Vagina (tissue), 2 donors: ENCODE measurements at regions of chr10 and their contacts with region 1.

Region 1: DNA sequence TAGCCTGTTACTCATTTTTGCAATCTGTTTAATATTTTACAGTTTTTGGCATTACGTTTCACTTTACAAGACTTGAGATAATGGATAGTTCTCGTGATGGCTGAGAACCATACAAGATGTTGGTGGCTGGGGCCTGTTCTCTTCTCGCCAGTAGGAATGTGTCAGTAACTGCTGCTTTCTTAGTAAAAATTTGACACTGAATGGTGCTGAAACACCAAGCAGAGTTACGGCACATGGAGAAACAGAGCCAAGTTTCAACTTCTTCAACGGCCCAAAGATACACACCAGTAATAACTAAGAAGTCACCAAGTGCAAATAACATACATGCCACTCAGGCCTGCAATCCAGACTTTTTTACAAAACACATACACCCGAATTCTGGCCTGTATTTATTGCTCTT is 130.4 kb downstream of the NRP1 start:
- DNase-seq: no peak
- H3K4me3 ChIP-seq: no peak overlapping the region
- H3K27ac ChIP-seq: no peak overlapping the region
- H3K4me1 ChIP-seq: no peaks in the 10 kb centered on the region
- H3K27me3 ChIP-seq: no peaks in the 10 kb centered on the region
- CTCF ChIP-seq: no peak
- POLR2A ChIP-seq: no peak

Region 2: GRCh38 chr10:33109788-33110469 is 94.1 kb before region 1 on chr10:
- intact Hi-C with region 1: no loop called
- DNase-seq: no peak
- H3K4me3 ChIP-seq: no peak overlapping the region
- H3K27ac ChIP-seq: no peak overlapping the region
- H3K4me1 ChIP-seq: peaks cover 5% of the 10 kb centered on the region
- H3K27me3 ChIP-seq: no peaks in the 10 kb centered on the region
- CTCF ChIP-seq: no peak
- POLR2A ChIP-seq: no peak

Region 3: DNA sequence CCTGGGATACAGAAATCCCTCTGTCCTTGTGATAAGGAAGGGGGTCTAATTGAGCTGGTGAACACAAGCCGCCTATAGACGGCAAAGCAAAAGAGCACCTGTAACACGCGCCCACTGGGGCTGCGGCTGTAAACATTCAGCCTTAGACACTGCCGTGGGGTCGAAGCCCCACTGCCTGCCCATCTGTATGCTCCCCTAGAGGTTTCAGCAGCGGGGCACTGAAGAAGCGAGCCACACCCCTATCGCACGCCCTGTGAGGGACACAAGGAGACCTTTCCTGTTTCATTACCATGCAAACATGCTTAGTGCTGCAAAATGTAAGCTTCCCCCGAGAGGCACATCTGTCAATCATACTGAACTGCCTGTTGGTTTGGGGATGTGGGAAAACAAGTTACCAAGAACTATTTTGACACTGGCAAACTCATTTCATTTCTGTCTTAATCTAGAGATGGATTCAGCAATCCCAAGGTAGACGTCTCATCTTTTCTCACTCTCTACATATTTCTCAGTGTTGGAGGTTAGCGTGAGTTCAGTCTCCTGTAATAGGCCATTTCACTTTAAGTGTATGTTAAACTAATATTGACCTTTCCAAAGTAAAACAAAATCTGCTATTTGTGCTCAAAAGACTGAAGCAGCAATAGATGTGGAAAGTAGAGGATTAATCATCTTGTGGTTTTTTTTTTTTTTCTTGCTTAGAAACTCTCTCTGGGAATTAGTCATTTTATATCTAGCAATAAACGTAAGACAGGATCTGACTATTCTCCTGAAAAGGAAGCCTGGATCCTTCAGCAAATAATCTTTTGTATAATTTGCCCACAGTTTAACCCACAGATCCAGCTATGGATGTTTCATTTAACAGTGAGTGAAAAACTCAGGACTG is 48.5 kb after region 1 on chr10:
- intact Hi-C with region 1: loop called (anchors 10 kb)
- DNase-seq: no peak
- H3K4me3 ChIP-seq: no peak overlapping the region
- H3K27ac ChIP-seq: no peak overlapping the region
- H3K4me1 ChIP-seq: no peaks in the 10 kb centered on the region
- H3K27me3 ChIP-seq: no peaks in the 10 kb centered on the region
- CTCF ChIP-seq: no peak
- POLR2A ChIP-seq: no peak

Region 4: DNA sequence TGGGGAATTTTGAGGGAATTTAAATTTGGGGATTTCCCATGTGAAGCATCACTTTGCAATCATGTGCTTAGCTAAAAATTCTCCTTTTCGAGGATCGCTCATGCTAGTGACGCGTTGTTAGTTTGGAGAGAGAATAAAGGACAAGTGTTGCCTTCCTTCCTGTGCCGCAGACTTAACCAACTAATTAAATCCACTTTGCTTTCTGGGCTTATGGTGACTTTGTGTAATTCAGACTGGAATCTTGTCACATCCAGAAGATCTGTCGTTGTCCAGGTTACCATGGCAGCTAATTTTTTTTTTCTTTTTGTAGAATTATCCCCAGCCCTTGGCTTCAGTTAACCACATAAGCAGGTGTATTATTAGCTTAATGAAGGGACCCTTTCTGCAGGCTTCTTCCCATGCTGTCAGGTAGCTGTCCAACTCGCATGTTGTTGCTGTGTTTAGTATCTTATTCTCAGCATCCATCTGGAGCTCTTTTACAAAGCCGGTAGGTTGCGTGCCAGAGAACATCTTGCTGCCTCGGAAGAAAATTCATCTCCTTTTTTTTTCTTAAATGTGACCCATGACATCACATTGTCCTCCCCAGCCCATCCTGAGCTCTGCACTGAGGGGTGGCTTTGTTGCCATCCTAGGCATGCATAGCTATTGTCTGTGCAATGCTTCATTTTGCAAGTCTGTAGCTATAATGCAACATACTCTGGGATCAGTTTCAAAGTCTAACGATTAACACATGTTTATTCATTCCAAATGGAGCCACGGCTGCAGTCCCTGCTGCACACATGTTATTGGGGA is 177.6 kb after region 1 on chr10:
- intact Hi-C with region 1: no loop called
- DNase-seq: no peak
- H3K4me3 ChIP-seq: no peak overlapping the region
- H3K27ac ChIP-seq: no peak overlapping the region
- H3K4me1 ChIP-seq: peaks cover 13% of the 10 kb centered on the region
- H3K27me3 ChIP-seq: no peaks in the 10 kb centered on the region
- CTCF ChIP-seq: no peak
- POLR2A ChIP-seq: no peak